Panc1 (cell line): ENCODE measurements at regions of chr11 and their contacts with region 1.

Region 1: DNA sequence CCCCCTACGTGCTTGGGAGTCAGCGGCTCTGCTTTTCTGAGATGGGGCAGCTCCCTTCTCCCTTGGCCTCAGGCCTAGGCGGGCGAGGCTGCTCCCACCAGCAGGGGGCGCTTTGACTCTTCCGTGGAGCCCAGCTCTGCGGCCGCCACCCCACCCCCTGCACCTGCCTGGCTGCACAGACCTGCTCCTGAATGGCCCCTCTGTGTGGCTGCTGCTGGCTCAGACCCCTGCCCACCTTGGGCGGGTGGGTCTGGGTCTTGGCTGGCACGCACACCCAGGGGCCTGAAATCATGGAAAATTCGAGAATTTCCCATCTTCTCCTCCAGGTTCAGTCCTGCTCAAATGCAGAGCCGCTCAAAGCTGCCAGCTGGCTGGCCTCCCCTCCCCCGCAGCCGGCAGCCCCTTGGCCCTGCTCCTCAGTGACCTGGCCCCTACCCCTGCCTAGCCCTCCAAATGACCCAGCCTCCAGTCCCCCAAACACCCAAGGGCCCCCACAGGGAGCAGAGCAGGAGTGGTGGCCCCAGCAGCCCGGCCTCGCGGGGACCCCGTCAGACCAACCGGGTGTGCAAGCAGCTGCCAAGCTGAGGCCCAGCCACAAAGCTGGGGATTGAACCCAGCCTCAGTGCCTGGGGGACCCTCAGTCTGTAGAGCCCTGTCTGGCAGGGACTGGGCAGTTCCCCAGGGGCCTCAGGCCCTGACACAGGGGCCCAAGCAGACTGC is 9.0 kb downstream of the PRR33 start:
- DNase-seq: peak; percentile 22
- ATAC-seq: peak; percentile 93
- H3K4me3 ChIP-seq: no peak overlapping the region
- H3K27ac ChIP-seq: no peak overlapping the region
- H3K4me1 ChIP-seq: peaks cover 2% of the 10 kb centered on the region; the same call in 1 of the 2 replicates
- H3K27me3 ChIP-seq: no peaks in the 10 kb centered on the region
- CTCF ChIP-seq: peak; percentile 100

Region 2: DNA sequence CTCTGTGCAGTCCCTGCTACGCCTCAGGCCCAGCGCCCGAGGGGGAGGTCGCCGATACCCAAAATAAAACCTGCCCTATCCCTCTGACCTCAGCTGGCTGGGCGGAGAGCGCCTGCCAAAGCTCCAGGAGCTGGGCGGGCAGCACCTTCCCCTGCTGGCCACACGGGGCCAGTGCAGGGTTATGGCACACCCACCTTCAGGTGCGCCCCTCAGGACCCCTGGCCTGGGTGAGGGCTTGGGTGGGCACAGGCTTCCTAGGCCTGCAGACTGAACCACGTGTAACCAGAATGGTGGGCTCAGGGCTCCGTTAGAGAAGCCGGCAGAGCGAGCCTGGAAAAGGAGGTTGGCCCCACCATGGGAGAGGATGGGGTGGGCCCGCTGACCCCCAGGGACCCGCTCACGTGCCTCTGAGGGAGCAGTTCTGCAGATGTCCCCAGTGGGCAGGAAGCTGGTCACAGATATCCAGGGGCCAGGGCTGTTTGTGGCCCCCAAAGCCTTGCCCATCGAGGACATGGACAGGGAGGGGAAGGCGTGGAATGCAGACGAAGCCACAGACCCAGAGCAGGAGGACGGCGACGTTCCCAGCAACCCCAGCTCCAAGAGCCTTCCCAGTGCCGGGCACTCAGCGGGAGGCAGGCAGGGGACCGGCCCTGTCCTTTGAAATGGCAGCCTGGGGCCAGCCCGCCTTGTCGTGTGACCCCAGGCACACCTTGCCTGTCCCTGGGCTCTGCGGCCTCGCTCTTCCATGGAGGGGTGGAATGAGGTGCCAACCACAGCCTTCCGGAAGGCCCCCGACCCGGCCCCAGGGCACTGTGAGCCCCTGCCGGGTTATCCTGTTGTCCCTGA is 35.2 kb after region 1 on chr11:
- CTCF ChIA-PET with region 1: interaction called, 15 read pairs
- POLR2A ChIA-PET with region 1: no interaction called
- in situ Hi-C with region 1: no loop called
- intact Hi-C with region 1: no loop called
- DNase-seq: no peak
- ATAC-seq: peak; percentile 43
- H3K4me3 ChIP-seq: no peak overlapping the region
- H3K27ac ChIP-seq: no peak overlapping the region
- H3K4me1 ChIP-seq: peaks cover 9% of the 10 kb centered on the region
- H3K27me3 ChIP-seq: no peaks in the 10 kb centered on the region
- CTCF ChIP-seq: peak; percentile 86; the same call in 1 of the 2 replicates

Region 3: DNA sequence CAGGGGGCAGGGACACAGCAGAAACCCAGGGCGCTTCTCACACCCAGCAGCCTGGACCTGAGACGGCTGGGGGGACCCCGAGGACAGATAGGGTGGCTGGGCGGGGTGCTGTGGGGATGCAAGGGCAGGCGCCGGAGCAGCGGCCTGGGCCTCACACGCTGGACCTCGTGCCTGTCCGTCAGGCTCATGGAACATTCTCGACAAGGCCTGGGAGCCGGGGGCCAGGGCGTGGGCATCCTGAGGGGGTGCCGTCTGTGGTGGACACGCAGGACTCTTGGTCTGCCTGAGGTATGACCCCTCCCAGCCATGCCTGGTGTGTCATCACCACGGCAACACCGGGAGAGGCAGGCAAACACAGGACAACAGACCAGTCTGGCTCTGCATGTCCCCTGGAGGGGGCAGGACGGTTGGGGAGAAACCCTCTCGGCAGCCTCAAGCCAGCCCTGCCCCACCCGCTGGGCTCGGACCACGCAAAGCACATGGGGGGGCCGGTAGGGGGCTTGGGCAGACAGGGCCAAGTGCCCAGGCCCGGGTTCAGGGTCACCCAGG is 85.8 kb after region 1 on chr11:
- CTCF ChIA-PET with region 1: interaction called, 13 read pairs
- POLR2A ChIA-PET with region 1: no interaction called
- in situ Hi-C with region 1: no loop called
- intact Hi-C with region 1: no loop called
- DNase-seq: no peak
- ATAC-seq: peak; percentile 66
- H3K4me3 ChIP-seq: no peak overlapping the region
- H3K27ac ChIP-seq: no peak overlapping the region
- H3K4me1 ChIP-seq: no peaks in the 10 kb centered on the region
- H3K27me3 ChIP-seq: no peaks in the 10 kb centered on the region
- CTCF ChIP-seq: no peak

Region 4: DNA sequence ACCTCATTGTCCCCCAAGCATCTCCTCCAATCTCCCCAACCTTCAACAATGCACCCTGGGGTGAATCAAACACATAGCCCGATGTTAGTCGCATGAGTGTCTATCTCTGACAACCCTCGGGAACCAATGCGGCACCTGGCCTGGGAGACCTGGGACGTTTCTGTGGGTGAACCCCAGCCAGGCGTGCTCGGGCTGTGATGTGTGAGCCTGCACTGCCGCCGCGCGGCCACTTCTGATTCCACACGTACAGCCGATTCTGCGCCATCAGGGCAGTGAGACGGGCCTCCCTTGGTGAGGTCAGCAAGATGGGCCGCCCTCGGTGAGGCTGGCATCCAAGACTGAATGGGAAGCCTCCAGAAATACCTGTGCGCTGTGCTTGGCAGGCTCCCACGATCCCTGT is 120.1 kb after region 1 on chr11:
- CTCF ChIA-PET with region 1: interaction called, 24 read pairs
- POLR2A ChIA-PET with region 1: no interaction called
- in situ Hi-C with region 1: no loop called
- intact Hi-C with region 1: no loop called
- DNase-seq: no peak
- ATAC-seq: peak; percentile 64
- H3K4me3 ChIP-seq: no peak overlapping the region
- H3K27ac ChIP-seq: no peak overlapping the region
- H3K4me1 ChIP-seq: no peaks in the 10 kb centered on the region
- H3K27me3 ChIP-seq: no peaks in the 10 kb centered on the region
- CTCF ChIP-seq: no peak